HCT116 (cell line): ENCODE measurements at regions of chr15 and their contacts with region 1.

Region 1: DNA sequence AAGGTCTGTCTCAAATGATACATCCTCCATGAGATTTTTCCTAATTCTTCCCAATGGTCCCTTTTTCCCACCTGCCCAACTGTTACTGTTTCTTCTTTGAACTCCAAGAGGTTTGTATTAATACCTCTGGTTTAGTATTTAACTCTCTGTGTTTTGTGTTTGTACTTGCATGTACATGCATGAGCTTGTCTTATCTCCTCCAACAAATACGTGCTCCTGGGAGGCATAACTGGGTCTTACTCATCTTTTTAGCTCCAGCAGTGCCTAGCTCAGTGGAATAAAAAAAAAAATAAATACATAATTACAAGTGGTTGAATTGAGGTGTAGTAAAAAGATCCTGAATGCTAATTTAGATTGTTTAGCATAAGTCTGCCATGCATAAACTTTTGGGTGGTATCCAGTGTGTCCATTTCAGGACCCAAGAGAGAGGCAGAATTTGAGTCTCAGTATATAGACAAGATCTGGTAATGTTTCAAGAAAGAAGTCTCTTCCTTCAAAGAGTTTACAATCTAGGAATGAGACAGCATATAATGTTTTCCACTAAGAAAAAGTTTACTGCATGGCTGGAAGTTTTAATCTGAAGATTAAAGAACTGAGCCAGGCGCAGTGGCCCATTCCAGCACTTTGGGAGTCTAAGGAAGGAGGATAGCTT is 1.7 kb upstream of the LYSMD2 start:
- DNase-seq: no peak
- ATAC-seq: no peak
- H3K4me3 ChIP-seq: no peak overlapping the region
- H3K27ac ChIP-seq: no peak overlapping the region
- H3K4me1 ChIP-seq: peaks cover 12 to 19% of the 10 kb centered on the region in 2 experiments
- H3K27me3 ChIP-seq: no peaks in the 10 kb centered on the region
- CTCF ChIP-seq: no peak
- POLR2A ChIP-seq: no peak
- RAD21 ChIP-seq: no peak

Region 2: DNA sequence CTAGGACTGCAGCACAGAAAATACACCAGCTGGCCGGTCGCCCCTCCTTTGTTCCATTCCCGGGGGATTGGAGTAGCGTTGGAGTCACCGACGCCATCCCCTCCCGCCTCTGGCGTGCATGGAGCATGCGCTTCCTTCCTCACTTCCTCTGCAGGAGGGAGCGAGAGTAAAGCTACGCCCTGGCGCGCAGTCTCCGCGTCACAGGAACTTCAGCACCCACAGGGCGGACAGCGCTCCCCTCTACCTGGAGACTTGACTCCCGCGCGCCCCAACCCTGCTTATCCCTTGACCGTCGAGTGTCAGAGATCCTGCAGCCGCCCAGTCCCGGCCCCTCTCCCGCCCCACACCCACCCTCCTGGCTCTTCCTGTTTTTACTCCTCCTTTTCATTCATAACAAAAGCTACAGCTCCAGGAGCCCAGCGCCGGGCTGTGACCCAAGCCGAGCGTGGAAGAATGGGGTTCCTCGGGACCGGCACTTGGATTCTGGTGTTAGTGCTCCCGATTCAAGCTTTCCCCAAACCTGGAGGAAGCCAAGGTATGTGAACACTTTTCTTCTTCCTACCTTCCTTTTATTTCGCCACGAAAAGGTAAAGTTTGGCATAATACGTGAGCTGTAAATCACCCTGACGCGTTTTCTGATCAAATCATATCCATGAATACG is 57.8 kb before region 1 on chr15 and contains the start of gene SCG3:
- CTCF ChIA-PET with region 1: no interaction called
- POLR2A ChIA-PET with region 1: no interaction called
- RAD21 ChIA-PET with region 1: no interaction called
- intact Hi-C with region 1: no loop called
- DNase-seq: peak; percentile 10
- ATAC-seq: peak; percentile 81
- H3K4me3 ChIP-seq: no peak within 1 kb of the TSS
- H3K27ac ChIP-seq: no peak within 1 kb of the TSS
- H3K4me1 ChIP-seq: no peaks in the 10 kb centered on the region
- H3K27me3 ChIP-seq: peaks cover 33% of the 10 kb centered on the region; the same call in 1 of the 2 replicates
- CTCF ChIP-seq: no peak
- POLR2A ChIP-seq: no peak
- RAD21 ChIP-seq: no peak
- total RNA-seq, gene SCG3: not detected

Region 3: DNA sequence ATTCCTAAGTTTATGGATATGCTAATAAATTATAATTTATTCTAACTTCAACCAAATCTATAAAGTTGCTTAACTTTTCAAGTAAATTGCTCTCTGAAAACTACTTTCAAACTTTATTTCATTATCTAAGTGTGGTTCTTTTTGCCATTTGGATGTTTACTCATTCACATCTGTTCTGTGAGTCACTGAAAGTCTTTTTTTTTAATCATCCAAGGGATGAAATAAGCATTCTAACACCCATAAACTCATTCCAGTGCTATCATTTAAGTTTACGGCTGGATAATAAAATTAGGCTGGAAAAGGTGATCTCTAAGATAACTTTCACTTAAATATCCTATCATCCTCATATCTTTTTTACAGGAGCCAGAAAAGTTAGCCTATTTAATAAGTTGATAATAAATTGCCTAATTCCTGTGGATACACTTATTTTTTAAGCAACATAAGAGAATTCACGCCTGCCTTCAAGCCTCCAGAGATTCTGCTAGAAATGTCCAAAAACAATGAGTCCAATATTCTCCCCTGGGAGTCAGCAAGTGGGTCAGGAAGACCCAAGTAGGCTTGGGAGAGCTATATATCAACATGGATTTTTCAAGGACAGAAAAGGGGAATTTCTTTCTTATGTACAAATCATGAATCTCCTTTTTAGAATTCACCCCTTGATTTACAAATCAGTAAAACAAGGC is 32.1 kb before region 1 on chr15:
- CTCF ChIA-PET with region 1: no interaction called
- POLR2A ChIA-PET with region 1: no interaction called
- RAD21 ChIA-PET with region 1: no interaction called
- intact Hi-C with region 1: loop called (anchors 1 kb)
- DNase-seq: no peak
- ATAC-seq: no peak
- H3K4me3 ChIP-seq: no peak overlapping the region
- H3K27ac ChIP-seq: no peak overlapping the region
- H3K4me1 ChIP-seq: no peaks in the 10 kb centered on the region
- H3K27me3 ChIP-seq: no peaks in the 10 kb centered on the region
- CTCF ChIP-seq: no peak
- POLR2A ChIP-seq: no peak
- RAD21 ChIP-seq: no peak